ENCODE measurements at regions of chr3 and their contacts with region 1.

Region 1: DNA sequence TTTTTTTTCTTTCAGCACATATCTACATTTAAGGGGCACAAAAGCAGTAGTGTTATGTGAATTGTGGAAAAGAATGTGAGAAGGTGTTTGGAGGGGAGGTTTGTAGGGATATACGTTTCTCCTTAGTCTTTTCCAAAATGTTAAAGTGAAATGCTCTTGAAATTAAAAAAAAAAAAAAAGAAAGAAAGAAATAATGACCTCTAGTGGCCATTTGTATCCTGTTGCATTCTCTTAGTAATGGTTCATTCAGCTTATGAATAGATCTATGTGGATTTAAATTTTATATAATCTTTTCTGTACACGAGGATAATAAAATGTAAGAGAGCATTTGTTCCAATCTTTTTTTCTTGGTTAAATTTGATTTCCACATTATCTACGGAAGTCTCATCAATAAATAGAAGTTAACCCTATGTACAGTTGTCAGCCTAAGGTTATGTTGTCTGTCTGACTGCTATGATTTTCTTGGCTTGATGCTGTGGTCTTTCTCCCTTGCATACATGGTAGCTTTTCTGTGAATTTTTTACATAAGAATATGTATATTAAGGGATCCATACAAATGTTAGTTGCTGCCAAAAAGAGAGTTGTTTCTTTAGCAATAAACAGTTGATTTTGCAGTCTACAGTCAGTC is 1.7 kb downstream of the P2RY13 start:
- DNase-seq: no peak
- ATAC-seq: no peak
- H3K4me3 Mint-ChIP-seq: no peak overlapping the region
- H3K27ac Mint-ChIP-seq: no peak overlapping the region
- H3K4me1 Mint-ChIP-seq: peaks cover 8% of the 10 kb centered on the region
- H3K27me3 Mint-ChIP-seq: peaks cover 4% of the 10 kb centered on the region

Region 2: DNA sequence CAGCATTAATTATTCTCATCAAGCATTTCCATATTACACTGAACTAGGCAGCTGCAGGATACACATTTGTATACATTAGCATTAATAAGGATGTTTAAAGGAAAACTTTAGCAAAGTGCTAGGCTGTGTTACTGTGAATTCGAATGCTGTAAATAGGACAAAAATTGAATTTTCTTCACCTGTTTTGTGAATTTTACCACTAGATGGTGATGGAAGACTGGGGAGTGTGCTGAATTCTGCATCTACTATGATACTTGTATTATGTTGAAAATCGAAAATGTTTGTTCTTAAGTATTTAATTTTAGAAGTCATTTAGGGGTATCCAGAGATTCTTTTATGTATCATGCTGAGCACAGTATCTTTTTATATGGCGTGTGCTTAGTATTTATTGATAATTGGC is 37.0 kb before region 1 on chr3:
- CTCF ChIA-PET with region 1: interaction called, 14 read pairs
- POLR2A ChIA-PET with region 1: no interaction called
- DNase-seq: no peak
- ATAC-seq: no peak
- H3K4me3 Mint-ChIP-seq: no peak overlapping the region
- H3K27ac Mint-ChIP-seq: no peak overlapping the region
- H3K4me1 Mint-ChIP-seq: no peaks in the 10 kb centered on the region
- H3K27me3 Mint-ChIP-seq: peaks cover 23% of the 10 kb centered on the region

Region 3: DNA sequence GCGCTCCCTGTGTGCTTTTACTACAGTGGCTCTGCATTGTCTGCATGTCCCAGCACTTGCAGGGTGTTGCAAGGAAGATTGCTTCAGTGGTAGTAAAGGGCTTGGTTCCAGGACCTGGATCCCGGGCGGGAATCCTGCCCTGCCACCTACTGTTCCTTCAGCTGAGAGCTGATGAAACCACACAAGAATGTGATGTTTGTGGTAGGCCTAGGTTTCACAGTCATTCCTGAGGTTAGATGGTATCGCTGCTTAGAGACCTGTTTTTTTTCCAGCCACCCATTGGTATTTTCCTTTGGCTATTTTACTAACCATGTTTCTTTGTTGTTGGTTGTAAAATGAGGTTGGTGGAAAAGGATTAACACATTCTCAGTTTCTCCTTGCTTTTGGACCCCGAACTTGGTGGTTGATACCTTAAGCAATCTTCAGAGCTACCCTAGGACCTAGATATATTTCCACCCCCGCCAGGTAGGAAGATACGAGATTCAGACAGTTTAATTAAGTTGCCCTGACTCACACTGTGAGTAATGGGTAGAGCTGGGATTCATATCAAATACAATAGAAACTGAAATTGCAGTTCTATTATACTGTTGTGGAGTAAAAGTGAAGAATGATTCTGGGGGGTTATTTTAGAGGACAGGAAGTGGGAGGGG is 22.5 kb before region 1 on chr3:
- CTCF ChIA-PET with region 1: interaction called, 26 read pairs
- POLR2A ChIA-PET with region 1: no interaction called
- DNase-seq: no peak
- ATAC-seq: peak; percentile 60
- H3K4me3 Mint-ChIP-seq: no peak overlapping the region
- H3K27ac Mint-ChIP-seq: no peak overlapping the region
- H3K4me1 Mint-ChIP-seq: peaks cover 13% of the 10 kb centered on the region
- H3K27me3 Mint-ChIP-seq: peaks cover 10% of the 10 kb centered on the region